Activated CD8-positive, alpha-beta T cell treated with anti-CD3 and anti-CD28 coated beads for 36 hours (primary cell): ENCODE measurements at regions of chr11 and their contacts with region 1.

Region 1: DNA sequence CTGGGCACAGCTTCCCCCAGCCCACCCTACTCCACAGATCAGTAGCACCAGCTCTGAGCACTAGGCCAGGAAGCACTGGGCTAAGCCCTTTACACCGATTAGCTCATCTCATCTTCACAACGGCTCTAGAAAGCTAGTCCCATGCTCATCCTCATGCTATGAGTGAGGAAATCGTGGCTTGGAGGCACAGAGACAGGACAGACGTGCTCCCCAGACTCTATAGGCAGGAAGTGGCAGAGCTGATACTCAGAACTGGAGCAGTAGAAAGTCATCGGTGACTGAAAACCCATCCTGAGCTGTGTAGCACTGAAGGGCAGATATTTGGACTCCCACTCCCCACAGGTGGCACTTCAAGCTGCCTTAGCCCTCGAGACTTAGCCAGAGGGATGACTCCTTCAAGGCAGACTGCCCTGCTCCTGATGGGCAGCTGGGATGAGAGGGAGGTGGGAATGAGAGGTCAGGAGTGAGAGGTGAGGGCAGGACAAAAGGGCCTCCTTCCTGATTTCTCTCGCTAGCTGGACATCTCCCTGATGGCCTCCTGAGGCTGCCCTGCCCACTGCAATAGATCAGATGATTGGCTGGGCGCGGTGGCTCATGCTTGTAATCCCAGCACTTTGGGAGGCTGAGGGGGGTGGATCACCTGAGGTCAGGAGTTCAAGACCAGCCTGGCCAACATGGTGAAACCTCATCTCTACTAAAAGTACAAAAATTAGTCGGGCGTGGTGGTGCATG is 9.7 kb downstream of the CD5 start:
- DNase-seq: peak; percentile 87
- ATAC-seq: peak; percentile 91
- H3K4me3 Mint-ChIP-seq: peak overlapping the region; percentile 68
- H3K27ac Mint-ChIP-seq: peak overlapping the region; percentile 85
- H3K4me1 Mint-ChIP-seq: peaks cover 95% of the 10 kb centered on the region
- H3K27me3 Mint-ChIP-seq: no peaks in the 10 kb centered on the region
- CTCF ChIP-seq: no peak

Region 2: DNA sequence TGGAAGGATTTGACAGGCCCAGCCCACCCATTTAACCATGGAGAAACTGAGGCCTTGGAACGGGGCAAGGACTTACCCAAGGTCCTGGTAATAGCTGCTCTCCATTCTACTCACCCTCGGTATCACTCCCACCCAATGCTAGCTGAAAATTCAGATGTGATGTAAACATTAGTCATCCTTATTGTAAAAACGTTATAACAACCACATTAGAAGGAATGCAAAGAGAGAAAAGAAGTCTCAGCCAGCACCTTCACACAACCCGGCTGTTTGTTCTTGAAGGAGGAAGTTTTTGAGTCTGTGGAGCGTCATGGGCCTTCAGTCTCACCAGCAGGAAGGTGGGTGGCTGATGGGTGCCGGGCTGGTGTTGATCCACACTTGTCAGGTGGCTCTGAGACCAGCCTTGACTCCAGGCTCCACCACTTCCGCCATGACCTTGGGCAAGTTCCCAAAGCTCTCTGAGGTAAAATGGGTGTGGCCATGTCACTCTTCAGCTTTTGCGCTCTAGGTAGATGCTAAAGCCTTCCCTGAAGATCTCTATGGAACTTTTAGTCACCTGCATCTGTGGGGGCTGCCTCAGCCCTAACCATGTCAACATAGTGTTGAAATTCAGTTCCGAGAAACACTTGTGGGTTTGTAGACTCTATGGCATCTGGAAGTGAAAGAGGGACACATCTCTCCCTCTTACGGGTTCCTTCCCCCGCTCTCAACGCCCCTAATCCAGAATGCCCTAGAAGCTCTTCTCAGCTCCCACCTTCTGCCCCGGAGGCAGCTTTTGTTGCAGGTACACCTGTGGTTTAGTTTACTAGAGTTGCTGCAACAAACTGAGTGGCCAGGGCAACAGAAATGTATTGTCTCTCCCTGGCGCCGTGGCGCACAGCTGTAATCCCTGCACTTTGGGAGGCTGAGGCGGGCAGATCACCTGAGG is 125.7 kb before region 1 on chr11:
- CTCF ChIA-PET with region 1: no interaction called
- POLR2A ChIA-PET with region 1: interaction called, 5 read pairs
- intact Hi-C with region 1: loop called (anchors 5 kb)
- DNase-seq: peak; percentile 98
- ATAC-seq: peak; percentile 84
- H3K4me3 Mint-ChIP-seq: peak overlapping the region; percentile 64
- H3K27ac Mint-ChIP-seq: peak overlapping the region; percentile 98
- H3K4me1 Mint-ChIP-seq: peaks cover 94% of the 10 kb centered on the region
- H3K27me3 Mint-ChIP-seq: no peaks in the 10 kb centered on the region
- CTCF ChIP-seq: no peak

Region 3: GRCh38 chr11:61028272-61028761 is 83.6 kb before region 1 on chr11:
- CTCF ChIA-PET with region 1: interaction called, 3 read pairs
- POLR2A ChIA-PET with region 1: interaction called, 27 read pairs
- intact Hi-C with region 1: loop called (anchors 5 kb)
- DNase-seq: peak; percentile 88
- ATAC-seq: peak; percentile 31
- H3K4me3 Mint-ChIP-seq: peak overlapping the region; percentile 79
- H3K27ac Mint-ChIP-seq: peak overlapping the region; percentile 96
- H3K4me1 Mint-ChIP-seq: peaks cover 75% of the 10 kb centered on the region
- H3K27me3 Mint-ChIP-seq: no peaks in the 10 kb centered on the region
- CTCF ChIP-seq: no peak

Region 4: GRCh38 chr11:61071208-61071681 is 40.7 kb before region 1 on chr11:
- CTCF ChIA-PET with region 1: interaction called, 5 read pairs
- POLR2A ChIA-PET with region 1: interaction called, 15 read pairs
- intact Hi-C with region 1: loop called (anchors 5 kb)
- DNase-seq: peak; percentile 87
- ATAC-seq: peak; percentile 95
- H3K4me3 Mint-ChIP-seq: peak overlapping the region; percentile 47
- H3K27ac Mint-ChIP-seq: peak overlapping the region; percentile 93
- H3K4me1 Mint-ChIP-seq: peaks cover 87% of the 10 kb centered on the region
- H3K27me3 Mint-ChIP-seq: no peaks in the 10 kb centered on the region
- CTCF ChIP-seq: no peak

Region 5: DNA sequence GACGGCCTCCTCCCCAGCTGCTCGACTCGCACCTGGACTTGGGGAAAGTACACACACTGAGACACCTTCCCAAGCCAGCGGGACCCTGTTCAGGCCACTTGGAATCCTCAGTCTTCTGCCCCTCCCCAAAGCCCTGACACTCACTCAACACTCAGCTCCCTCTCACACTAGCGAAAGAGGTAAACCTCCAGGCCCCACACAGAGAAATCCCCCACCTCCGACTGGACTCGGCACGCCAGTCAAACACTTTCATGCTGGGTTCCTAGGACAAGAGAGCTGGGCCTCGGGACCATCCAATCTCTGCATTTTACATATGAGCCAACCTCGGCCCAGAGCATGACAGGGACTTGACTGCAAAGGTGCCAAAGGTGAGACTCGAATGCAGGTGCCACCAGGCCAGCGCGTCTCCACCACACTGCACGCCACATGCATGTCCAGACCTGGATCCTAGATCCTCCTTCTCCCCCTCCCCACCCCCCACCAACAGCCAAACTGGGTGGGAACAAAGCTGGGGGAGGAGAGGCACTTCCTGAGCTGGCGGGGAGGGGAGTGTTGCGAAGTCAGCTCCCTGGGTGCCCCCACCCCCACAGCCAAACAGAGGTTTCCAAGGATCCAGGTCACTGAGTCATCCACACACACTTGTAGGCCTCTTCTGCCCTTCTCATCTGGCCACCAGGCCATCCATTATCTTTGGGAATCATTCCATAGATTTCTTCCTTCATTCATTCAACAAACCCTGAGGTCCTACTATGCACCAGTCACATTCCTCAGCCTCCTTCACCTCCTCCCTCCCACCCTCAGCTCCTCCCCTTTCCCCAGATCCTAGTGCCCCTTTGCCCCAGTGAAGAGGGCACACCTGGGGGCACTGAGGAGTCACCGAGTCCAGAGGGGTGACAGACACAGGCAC is 20.3 kb before region 1 on chr11:
- CTCF ChIA-PET with region 1: interaction called, 16 read pairs
- POLR2A ChIA-PET with region 1: interaction called, 23 read pairs
- intact Hi-C with region 1: no loop called
- DNase-seq: peak; percentile 79
- ATAC-seq: peak; percentile 68
- H3K4me3 Mint-ChIP-seq: peak overlapping the region; percentile 91
- H3K27ac Mint-ChIP-seq: peak overlapping the region; percentile 99
- H3K4me1 Mint-ChIP-seq: peaks cover 67% of the 10 kb centered on the region
- H3K27me3 Mint-ChIP-seq: no peaks in the 10 kb centered on the region
- CTCF ChIP-seq: no peak